Ovary (tissue), 10 donors: ENCODE measurements at regions of chr7 and their contacts with region 1.

Region 1: GRCh38 chr7:40611095-40611871 is 476.5 kb downstream of the SUGCT start:
- DNase-seq: no peak
- H3K4me3 ChIP-seq: no peak overlapping the region
- H3K27ac ChIP-seq: no peak overlapping the region
- H3K4me1 ChIP-seq: no peaks in the 10 kb centered on the region
- H3K27me3 ChIP-seq: no peaks in the 10 kb centered on the region
- CTCF ChIP-seq: no peak
- EP300 ChIP-seq: no peak
- POLR2A ChIP-seq: no peak

Region 2: GRCh38 chr7:40244226-40244625 is 367.1 kb before region 1 on chr7:
- intact Hi-C with region 1: loop called in 1 of 4 experiments (anchors 2 kb)
- DNase-seq: no peak
- H3K4me3 ChIP-seq: no peak overlapping the region
- H3K27ac ChIP-seq: no peak overlapping the region
- H3K4me1 ChIP-seq: no peaks in the 10 kb centered on the region
- H3K27me3 ChIP-seq: no peaks in the 10 kb centered on the region
- CTCF ChIP-seq: no peak
- EP300 ChIP-seq: no peak
- POLR2A ChIP-seq: no peak